ENCODE measurements at regions of chr18 and their contacts with region 1.

Region 1: GRCh38 chr18:13401404-13401803 is 182.8 kb downstream of the LDLRAD4 start:
- DNase-seq: no peak
- ATAC-seq: no peak
- H3K4me3 ChIP-seq: no peak overlapping the region
- H3K27ac ChIP-seq: no peak overlapping the region
- H3K4me1 ChIP-seq: peaks cover 18% of the 10 kb centered on the region
- H3K27me3 ChIP-seq: no peaks in the 10 kb centered on the region
- CTCF ChIP-seq: no peak
- EP300 ChIP-seq: no peak
- POLR2A ChIP-seq: no peak
- RAD21 ChIP-seq: no peak

Region 2: DNA sequence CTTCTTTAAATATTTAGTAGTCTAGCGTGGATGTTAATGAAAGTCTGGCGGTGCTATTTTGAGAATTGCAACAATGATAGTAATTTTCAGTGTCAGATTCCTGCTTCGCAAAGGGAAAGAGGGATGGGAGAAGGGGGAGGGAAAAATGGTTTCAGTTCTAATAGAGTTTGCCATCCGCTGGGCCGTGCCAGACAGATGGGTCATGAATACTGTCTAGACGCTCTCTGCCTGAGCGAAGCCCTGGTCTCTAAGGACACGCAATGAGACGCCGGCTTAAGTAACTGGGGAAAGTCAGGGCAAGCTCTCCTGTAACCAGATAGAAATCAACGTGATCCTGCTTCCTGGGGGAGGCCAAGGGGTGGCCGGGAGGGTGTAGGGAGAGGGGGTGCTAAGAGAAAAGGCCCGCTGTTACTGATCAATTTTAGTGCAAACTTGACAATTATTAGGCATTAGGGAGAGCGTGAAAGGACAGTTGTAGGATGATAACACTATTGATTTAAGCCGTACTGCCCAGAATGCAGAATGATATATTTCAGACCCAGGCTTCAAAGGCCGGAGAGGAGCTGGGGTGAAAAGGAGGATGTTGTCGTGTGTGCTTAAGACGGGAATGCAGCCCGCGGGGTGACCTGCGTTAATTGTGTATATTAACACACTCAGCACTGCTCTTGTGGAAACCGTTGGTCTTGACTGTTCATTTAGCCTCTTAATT is 46.4 kb after region 1 on chr18:
- CTCF ChIA-PET with region 1: no interaction called
- POLR2A ChIA-PET with region 1: no interaction called
- in situ Hi-C with region 1: no loop called
- intact Hi-C with region 1: no loop called
- DNase-seq: no peak
- ATAC-seq: no peak
- H3K4me3 ChIP-seq: no peak overlapping the region
- H3K27ac ChIP-seq: no peak overlapping the region
- H3K4me1 ChIP-seq: peaks cover 48% of the 10 kb centered on the region
- H3K27me3 ChIP-seq: no peaks in the 10 kb centered on the region
- CTCF ChIP-seq: no peak
- EP300 ChIP-seq: no peak
- POLR2A ChIP-seq: no peak
- RAD21 ChIP-seq: no peak

Region 3: GRCh38 chr18:13889666-13890065 is 488.3 kb after region 1 on chr18:
- CTCF ChIA-PET with region 1: no interaction called
- POLR2A ChIA-PET with region 1: no interaction called
- in situ Hi-C with region 1: no loop called
- intact Hi-C with region 1: loop called (anchors 10 kb)
- DNase-seq: peak; percentile 35
- ATAC-seq: peak; percentile 81
- H3K4me3 ChIP-seq: no peak overlapping the region
- H3K27ac ChIP-seq: no peak overlapping the region
- H3K4me1 ChIP-seq: peaks cover 9% of the 10 kb centered on the region; the same call in 1 of the 2 replicates
- H3K27me3 ChIP-seq: peaks cover 0 to 19% of the 10 kb centered on the region in 2 experiments; a peak in 3 of 5 replicates
- CTCF ChIP-seq: no peak
- EP300 ChIP-seq: no peak
- POLR2A ChIP-seq: no peak
- RAD21 ChIP-seq: no peak

Measured in HepG2 (cell line).